ENCODE measurements at regions of chr3 and their contacts with region 1.

Region 1: DNA sequence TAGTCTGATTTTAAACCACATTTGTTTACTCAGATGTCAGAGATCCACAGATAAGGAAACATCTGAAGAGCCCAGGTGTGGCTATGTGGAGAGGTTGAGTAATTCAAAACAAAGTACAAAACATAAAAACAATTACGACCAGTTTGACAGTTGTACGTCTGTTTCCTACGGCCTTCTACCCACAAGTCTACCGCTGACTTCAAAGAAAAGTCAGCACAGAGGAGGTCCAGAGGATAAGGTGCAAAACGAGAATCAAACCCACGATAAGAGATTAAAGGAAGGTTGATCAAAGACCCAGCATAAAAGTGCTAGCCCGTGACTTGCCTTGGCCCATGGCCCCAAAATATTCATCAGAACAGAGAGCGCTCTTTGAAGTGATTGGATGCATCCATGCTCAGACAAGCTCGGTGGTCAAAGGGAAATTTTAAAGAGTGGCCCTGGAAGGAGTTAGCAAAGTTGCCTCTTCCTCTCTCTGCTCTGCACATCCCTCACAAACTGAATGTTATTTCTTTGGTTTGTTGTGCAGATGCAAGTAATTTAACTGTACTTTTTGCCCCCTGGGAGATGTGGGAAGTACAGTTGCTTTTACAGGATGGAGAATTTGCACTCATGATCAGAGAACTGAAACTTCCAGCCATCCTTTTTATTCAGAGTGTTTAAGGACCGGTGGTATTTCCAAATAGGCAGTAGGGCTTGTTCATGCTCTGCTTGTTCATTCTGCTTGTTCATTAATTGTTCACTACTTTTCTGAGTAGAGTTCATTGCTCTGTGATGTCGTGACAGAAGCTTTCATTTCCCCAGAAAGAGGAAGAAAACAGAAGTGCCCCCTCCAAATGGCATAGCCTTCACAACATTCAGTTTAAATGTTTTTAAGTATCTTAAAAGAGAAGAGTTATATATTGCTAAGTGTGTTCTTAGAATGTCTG is 31.1 kb downstream of the MME start:
- DNase-seq: no peak
- ATAC-seq: peak; percentile 43
- H3K4me3 Mint-ChIP-seq: peak overlapping the region; percentile 56
- H3K27ac Mint-ChIP-seq: peak overlapping the region; percentile 54
- H3K4me1 Mint-ChIP-seq: peaks cover 51% of the 10 kb centered on the region
- H3K27me3 Mint-ChIP-seq: no peaks in the 10 kb centered on the region
- CTCF ChIP-seq: no peak

Region 2: GRCh38 chr3:153350420-153350819 is 1760.8 kb before region 1 on chr3:
- CTCF ChIA-PET with region 1: no interaction called
- POLR2A ChIA-PET with region 1: no interaction called
- intact Hi-C with region 1: no loop called
- DNase-seq: no peak
- ATAC-seq: no peak
- H3K4me3 Mint-ChIP-seq: no peak overlapping the region
- H3K27ac Mint-ChIP-seq: no peak overlapping the region
- H3K4me1 Mint-ChIP-seq: no peaks in the 10 kb centered on the region
- H3K27me3 Mint-ChIP-seq: peaks cover 7% of the 10 kb centered on the region
- CTCF ChIP-seq: no peak

Region 3: GRCh38 chr3:155079746-155080487 is 31.3 kb before region 1 on chr3 and contains the start of gene MME:
- CTCF ChIA-PET with region 1: no interaction called
- POLR2A ChIA-PET with region 1: interaction called, 3 read pairs
- intact Hi-C with region 1: loop called (anchors 1 kb)
- DNase-seq: peak; percentile 22
- ATAC-seq: peak; percentile 52
- H3K4me3 Mint-ChIP-seq: peak within 1 kb of the TSS; percentile 80
- H3K27ac Mint-ChIP-seq: no peak within 1 kb of the TSS
- H3K4me1 Mint-ChIP-seq: peaks cover 18% of the 10 kb centered on the region
- H3K27me3 Mint-ChIP-seq: peaks cover 26% of the 10 kb centered on the region
- CTCF ChIP-seq: no peak
- total RNA-seq, gene MME: 2.1 and 3.4 TPM in 2 replicates

Region 4: GRCh38 chr3:155097009-155097349 is 14.3 kb before region 1 on chr3:
- CTCF ChIA-PET with region 1: no interaction called
- POLR2A ChIA-PET with region 1: no interaction called
- intact Hi-C with region 1: no loop called
- DNase-seq: no peak
- ATAC-seq: no peak
- H3K4me3 Mint-ChIP-seq: no peak overlapping the region
- H3K27ac Mint-ChIP-seq: no peak overlapping the region
- H3K4me1 Mint-ChIP-seq: peaks cover 12% of the 10 kb centered on the region
- H3K27me3 Mint-ChIP-seq: no peaks in the 10 kb centered on the region
- CTCF ChIP-seq: no peak

Region 5: DNA sequence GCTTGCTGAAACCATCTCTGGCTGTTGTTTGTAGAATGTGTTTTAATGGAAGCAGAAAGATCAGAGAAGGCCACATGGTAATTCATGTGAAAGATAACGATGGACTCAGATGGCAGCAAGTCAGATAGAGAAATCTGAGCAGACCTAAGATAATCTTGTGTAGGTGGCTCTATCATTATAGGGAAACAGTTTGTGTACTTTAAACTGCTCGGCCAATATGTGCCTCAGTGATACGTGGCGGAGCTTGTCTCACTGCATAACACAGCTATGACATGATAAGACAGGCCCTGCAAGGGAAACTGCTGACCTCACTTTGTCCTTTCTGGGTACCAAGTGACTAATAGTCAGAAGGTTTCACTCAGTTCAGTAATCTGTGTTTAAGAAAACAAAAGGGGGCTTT is 19.9 kb after region 1 on chr3:
- CTCF ChIA-PET with region 1: no interaction called
- POLR2A ChIA-PET with region 1: interaction called, 4 read pairs
- intact Hi-C with region 1: loop called (anchors 1 kb)
- DNase-seq: no peak
- ATAC-seq: no peak
- H3K4me3 Mint-ChIP-seq: no peak overlapping the region
- H3K27ac Mint-ChIP-seq: no peak overlapping the region
- H3K4me1 Mint-ChIP-seq: peaks cover 16% of the 10 kb centered on the region
- H3K27me3 Mint-ChIP-seq: no peaks in the 10 kb centered on the region
- CTCF ChIP-seq: no peak